Heart right ventricle (tissue), 16 donors: ENCODE measurements at regions of chr2 and their contacts with region 1.

Region 1: DNA sequence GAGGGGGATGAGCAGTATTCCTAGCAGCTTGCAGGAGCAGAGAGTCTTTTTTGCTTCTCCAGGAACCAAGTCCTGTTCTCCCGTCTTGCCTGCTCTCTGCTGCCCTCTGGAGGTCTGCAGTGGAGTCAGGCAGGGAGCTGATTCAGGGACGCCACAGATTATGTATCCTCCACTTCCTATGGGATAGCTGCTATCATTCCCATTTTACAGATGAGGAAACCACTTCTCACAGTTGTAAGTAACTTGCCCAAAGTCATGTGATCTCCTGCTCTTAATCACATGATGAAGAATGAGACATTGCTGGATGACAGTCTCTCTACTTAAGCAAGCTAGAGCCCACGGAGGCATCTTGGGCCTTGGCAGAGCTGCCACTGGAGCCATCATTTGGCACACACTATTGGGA is 8.3 kb downstream of the SLC4A5 start:
- DNase-seq: peak; percentile 74 to 76
- ATAC-seq: peak; percentile 74 to 86 (median 82)
- H3K4me3 ChIP-seq: no peak overlapping the region
- H3K27ac ChIP-seq: no peak overlapping the region
- H3K4me1 ChIP-seq: peaks cover 0 to 6% (median 0%) of the 10 kb centered on the region in 9 donors
- H3K27me3 ChIP-seq: no peaks in the 10 kb centered on the region
- CTCF ChIP-seq: peak; percentile 85 to 99 (median 95)

Region 2: DNA sequence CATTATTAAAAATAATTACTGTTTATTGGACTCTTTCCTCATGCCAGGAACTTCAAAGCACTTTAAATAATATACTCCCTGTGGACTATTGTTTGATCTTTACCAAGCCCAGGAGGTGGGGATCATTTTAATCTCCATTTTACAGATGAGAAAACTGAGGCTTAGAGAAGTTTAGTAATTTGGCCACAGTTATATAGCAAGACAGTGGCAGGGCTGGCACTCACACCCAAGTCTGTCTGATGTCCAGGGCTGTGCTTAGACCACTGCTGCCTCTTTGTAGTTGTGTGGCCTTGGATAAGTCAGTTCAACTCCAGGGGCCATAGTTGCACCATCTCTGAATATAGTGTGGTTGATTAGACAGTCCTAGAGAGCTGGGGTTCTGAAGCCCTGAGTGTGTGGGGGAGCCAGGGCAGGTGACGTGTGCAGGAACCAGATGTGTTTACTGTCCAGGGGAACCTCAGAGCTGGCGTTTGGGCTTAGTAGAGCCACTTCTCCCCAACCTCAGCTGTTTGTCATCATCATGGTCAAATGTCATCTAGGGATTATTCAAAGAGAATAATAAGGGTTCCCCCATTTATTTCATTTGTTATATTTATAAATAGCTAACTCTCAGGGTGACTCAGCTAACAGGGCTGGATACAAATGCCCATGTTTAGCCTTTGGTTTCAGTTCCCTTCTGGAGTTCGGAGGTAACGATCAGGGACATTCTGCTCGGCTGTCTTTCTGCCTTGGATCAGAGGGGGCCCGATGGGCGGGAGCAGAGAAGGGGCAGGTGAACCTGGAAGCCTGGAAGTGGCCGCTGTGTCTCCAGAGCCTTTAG is 255.2 kb before region 1 on chr2:
- intact Hi-C with region 1: no loop called
- DNase-seq: no peak
- ATAC-seq: peak in 2 of 8 donors; percentile 20 to 28
- H3K4me3 ChIP-seq: no peak overlapping the region
- H3K27ac ChIP-seq: no peak overlapping the region
- H3K4me1 ChIP-seq: peaks cover 0 to 52% (median 26%) of the 10 kb centered on the region in 9 donors
- H3K27me3 ChIP-seq: no peaks in the 10 kb centered on the region
- CTCF ChIP-seq: no peak

Region 3: DNA sequence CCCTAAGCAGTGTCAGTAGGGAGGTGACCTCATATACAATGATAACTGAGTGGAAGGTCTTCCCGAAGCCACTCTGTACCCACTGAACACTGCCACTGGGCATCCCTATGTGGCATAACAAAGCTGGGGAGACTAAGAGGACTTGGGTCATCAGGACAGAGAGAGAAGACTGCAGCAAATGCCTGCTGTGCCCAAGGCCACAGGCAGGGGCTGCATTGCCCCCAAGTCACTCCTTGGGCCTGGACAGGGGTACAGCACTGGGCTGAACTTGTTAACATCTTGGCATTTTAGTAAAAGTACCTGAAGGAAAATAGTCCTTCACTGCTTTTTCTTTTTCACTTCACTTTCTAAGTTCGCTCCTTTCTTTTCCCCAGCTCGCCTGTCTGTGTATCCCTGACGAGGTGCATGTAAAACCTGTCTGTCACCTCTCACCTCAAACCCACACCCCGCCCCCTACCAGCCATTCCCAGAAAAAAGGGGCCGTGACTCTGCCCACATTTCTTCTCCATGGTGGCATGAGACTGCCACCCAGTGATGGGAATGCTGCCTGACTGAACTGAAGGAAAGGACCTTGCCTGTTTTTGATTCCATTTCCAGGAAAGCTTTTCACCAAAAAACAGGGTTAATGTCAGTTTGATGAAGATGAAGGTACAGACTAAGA is 73.6 kb before region 1 on chr2:
- intact Hi-C with region 1: loop called in 1 of 10 experiments (anchors 5 kb)
- DNase-seq: peak; percentile 28 to 51
- ATAC-seq: peak in 7 of 8 donors; percentile 46 to 81 (median 76)
- H3K4me3 ChIP-seq: no peak overlapping the region
- H3K27ac ChIP-seq: peak overlapping the region in 1 of 10 donors; percentile 6
- H3K4me1 ChIP-seq: peaks cover 0 to 3% (median 0%) of the 10 kb centered on the region in 9 donors
- H3K27me3 ChIP-seq: no peaks in the 10 kb centered on the region
- CTCF ChIP-seq: peak; percentile 15 to 71 (median 49)